Psoas muscle (tissue), 8 donors: ENCODE measurements at regions of chr9 and their contacts with region 1.

Region 1: GRCh38 chr9:34809504-34810186 is 99.7 kb upstream of the CCL21 start:
- DNase-seq: no peak
- ATAC-seq: peak in 3 of 4 donors; percentile 58 to 65 (median 59)
- H3K4me3 ChIP-seq: peak overlapping the region; percentile 40
- H3K27ac ChIP-seq: no peak overlapping the region
- H3K4me1 ChIP-seq: no peaks in the 10 kb centered on the region
- H3K27me3 ChIP-seq: peaks cover 4 to 27% (median 13%) of the 10 kb centered on the region in 3 donors
- CTCF ChIP-seq: peak; percentile 34

Region 2: DNA sequence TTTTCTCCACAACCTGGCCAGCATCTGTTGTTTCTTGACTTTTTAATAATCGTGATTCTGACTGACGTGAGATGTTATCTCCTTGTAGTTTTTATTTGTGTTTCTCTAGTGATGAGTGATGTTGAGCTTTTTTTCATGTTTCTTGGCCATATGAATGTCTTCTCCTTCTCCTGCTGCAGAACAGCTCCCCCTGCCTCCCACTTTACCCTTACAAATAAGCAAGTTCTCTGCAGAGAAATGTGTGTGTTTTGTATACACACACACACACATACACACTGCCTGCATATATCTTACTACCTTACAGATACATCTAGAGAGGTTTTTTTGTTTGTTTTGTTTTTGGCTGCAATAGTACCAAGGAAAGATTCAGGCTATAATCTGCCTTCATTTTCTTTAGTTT is 59.7 kb after region 1 on chr9:
- intact Hi-C with region 1: loop called in 1 of 2 experiments (anchors 10 kb)
- DNase-seq: no peak
- ATAC-seq: no peak
- H3K4me3 ChIP-seq: no peak overlapping the region
- H3K27ac ChIP-seq: no peak overlapping the region
- H3K4me1 ChIP-seq: peaks cover 8% of the 10 kb centered on the region
- H3K27me3 ChIP-seq: peaks cover 0 to 2% (median 0%) of the 10 kb centered on the region in 3 donors
- CTCF ChIP-seq: no peak

Region 3: GRCh38 chr9:34948451-34948850 is 138.8 kb after region 1 on chr9:
- intact Hi-C with region 1: loop called in 1 of 2 experiments (anchors 10 kb)
- DNase-seq: no peak
- ATAC-seq: no peak
- H3K4me3 ChIP-seq: no peak overlapping the region
- H3K27ac ChIP-seq: no peak overlapping the region
- H3K4me1 ChIP-seq: no peaks in the 10 kb centered on the region
- H3K27me3 ChIP-seq: no peaks in the 10 kb centered on the region
- CTCF ChIP-seq: no peak